ENCODE measurements at regions of chr17 and their contacts with region 1.

Region 1: DNA sequence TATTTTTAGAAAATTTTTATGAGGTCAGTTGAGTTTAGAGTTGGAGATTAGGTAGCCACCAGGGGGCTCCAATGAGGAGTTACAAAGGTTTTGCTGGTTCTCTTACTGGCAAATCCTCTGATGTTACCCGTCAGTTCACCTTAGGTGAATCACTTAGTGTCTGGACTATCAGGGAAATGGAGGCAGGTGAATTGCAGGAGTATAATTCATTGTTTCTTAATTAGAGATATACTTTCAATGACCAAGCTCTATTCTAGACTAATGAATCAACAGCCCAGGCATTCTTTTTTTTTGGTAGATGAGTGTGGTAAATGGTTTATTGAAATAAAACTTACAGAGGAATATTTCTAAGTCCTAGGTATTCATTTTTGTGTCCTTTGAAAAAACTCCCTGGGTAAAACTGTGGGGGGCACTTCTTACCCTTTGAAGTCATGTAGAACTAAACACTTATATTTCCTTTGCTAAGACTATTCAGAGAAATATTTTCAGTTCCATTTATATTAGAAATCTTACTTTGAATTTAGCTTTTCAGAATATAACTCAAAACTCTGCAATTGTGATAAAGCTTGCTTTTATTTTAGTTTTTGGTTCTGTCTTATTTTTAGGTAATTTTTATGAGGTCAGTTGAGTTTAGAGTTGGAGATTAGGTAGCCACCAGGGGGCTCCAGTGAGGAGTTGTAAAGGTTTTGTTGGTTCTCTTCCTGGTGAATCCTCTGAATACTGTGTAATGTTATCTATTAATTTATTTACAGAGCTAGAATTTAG is 17.7 kb downstream of the PSMD11 start:
- DNase-seq: peak; percentile 62
- H3K4me3 ChIP-seq: no peak overlapping the region
- H3K27ac ChIP-seq: no peak overlapping the region
- H3K4me1 ChIP-seq: no peaks in the 10 kb centered on the region
- H3K27me3 ChIP-seq: no peaks in the 10 kb centered on the region
- CTCF ChIP-seq: peak; percentile 66 to 71

Region 2: GRCh38 chr17:32253117-32253611 is 208.9 kb before region 1 on chr17:
- CTCF ChIA-PET with region 1: no interaction called
- dilution Hi-C with region 1: no loop called
- in situ Hi-C with region 1: no loop called
- intact Hi-C with region 1: loop called (anchors 5 kb)
- DNase-seq: peak; percentile 61
- H3K4me3 ChIP-seq: no peak overlapping the region
- H3K27ac ChIP-seq: no peak overlapping the region
- H3K4me1 ChIP-seq: no peaks in the 10 kb centered on the region
- H3K27me3 ChIP-seq: peaks cover 2% of the 10 kb centered on the region
- CTCF ChIP-seq: peak; percentile 100

Region 3: GRCh38 chr17:32609085-32609484 is 147.1 kb after region 1 on chr17:
- CTCF ChIA-PET with region 1: interaction called, 4 read pairs
- dilution Hi-C with region 1: no loop called
- in situ Hi-C with region 1: no loop called
- intact Hi-C with region 1: loop called (anchors 1 kb)
- DNase-seq: peak; percentile 69
- H3K4me3 ChIP-seq: no peak overlapping the region
- H3K27ac ChIP-seq: no peak overlapping the region
- H3K4me1 ChIP-seq: peaks cover 3% of the 10 kb centered on the region
- H3K27me3 ChIP-seq: no peaks in the 10 kb centered on the region
- CTCF ChIP-seq: peak; percentile 62 to 73

Measured in mammary epithelial cell (primary cell).